BJ (cell line): ENCODE measurements at regions of chr7 and their contacts with region 1.

Region 1: DNA sequence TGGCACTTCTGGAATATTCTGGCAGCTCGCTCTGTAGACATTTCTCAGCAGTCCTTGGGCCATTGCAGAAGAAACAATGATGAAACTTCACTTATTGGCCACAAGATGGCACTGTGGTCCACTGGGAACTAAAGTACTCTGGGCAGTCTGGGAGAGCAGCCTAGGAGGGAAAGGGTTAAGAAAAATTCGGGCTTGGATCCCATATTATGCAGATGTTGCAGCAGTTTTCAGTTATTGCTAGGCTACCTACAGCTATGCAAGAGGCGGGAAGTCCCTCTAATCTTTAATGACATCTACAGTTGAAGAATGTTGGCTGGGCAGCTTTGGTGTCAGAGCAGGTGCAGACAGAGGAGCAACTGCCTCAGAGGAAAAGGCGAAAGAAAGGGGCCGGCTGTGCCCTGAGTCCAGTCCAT is 201.7 kb upstream of the PRSS58 start:
- DNase-seq: peak; percentile 41
- H3K4me3 ChIP-seq: no peak overlapping the region
- H3K27me3 ChIP-seq: no peaks in the 10 kb centered on the region
- CTCF ChIP-seq: peak; percentile 75

Region 2: GRCh38 chr7:142385491-142386340 is 73.8 kb before region 1 on chr7:
- CTCF ChIA-PET with region 1: interaction called, 19 read pairs
- POLR2A ChIA-PET with region 1: no interaction called
- DNase-seq: no peak
- H3K4me3 ChIP-seq: no peak overlapping the region
- H3K27me3 ChIP-seq: peaks cover 2% of the 10 kb centered on the region
- CTCF ChIP-seq: peak; percentile 82

Region 3: GRCh38 chr7:142438235-142438922 is 21.2 kb before region 1 on chr7:
- CTCF ChIA-PET with region 1: interaction called, 90 read pairs
- POLR2A ChIA-PET with region 1: no interaction called
- DNase-seq: no peak
- H3K4me3 ChIP-seq: no peak overlapping the region
- H3K27me3 ChIP-seq: no peaks in the 10 kb centered on the region
- CTCF ChIP-seq: peak; percentile 68

Region 4: DNA sequence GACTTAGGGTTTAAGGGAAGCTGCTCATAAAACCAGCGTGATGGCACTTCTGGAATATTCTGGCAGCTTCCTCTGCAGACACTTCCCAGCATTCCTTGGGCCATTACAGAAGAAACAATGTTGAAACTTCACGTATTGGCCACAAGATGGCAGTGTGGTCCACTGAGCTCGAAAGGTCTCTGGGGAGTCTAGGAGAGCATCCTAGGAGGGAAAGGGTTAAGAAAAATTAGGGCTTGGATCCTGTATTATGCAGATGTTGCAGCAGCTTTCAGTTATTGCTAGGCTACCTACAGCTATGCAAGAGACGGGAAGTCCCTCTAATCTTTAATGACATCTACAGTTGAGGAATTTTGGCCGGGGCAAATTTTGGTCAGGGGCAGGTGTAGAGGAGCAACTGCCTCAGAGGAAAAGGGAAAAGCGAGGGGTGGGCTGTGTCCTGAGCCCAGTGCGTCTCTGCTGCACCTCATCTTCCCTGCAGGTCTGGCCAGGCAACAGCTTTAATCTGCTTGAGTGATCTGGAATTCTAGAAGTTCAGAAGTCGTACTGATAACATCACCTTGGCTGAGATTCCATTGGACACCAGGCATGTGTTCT is 19.0 kb after region 1 on chr7:
- CTCF ChIA-PET with region 1: interaction called, 641 read pairs
- POLR2A ChIA-PET with region 1: interaction called, 3 read pairs
- DNase-seq: no peak
- H3K4me3 ChIP-seq: no peak overlapping the region
- H3K27me3 ChIP-seq: no peaks in the 10 kb centered on the region
- CTCF ChIP-seq: peak; percentile 74

Region 5: GRCh38 chr7:142516038-142516501 is 56.5 kb after region 1 on chr7:
- CTCF ChIA-PET with region 1: interaction called, 19 read pairs
- POLR2A ChIA-PET with region 1: no interaction called
- DNase-seq: no peak
- H3K4me3 ChIP-seq: no peak overlapping the region
- H3K27me3 ChIP-seq: peaks cover 2% of the 10 kb centered on the region
- CTCF ChIP-seq: peak; percentile 83